ENCODE measurements at regions of chr19 and their contacts with region 1.

Region 1: DNA sequence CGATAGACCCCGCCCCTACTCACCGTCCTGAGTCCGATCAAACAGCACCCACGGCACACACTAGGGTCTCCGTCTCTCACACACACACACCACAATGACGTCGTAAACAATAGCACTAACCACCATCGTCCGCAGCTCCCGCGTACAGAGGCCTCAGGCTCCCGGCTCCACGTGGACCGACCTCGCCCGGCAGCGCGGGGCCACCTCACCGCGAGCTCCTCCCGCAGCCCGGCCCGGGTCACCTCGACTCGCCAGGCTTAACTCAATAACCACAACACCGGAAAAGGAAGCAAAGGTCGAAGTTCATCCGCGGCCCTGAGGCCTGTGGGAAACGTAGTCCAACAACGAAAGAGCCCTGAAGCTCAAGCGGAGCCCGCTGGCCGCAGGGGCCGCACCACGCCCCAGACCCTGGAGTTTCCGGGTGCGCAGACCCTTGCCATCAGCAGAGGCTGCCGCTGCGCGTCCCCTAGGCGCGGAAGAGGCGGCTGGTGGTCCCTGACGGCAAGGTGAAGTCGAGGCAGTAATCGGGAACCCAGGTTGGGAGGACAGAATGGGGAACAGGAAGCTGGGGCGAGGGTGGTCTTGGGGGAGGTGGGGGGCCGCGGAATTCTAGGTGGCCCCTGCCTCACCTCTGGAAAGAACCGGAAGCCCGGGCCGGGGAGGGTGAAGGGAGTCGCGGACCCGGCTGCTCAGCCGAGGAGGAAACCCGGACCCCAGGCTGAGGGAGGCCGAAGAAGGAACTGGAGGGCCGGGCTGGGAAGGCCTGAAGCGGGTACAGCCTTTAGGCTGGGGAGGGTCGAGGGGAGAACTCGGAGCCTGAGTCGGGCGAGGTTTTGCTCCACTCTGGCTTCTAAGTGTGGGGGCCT is at the start of gene ZNF529:
- DNase-seq: peak; percentile 87
- H3K4me3 ChIP-seq: peak within 1 kb of the TSS; percentile 53 to 100 (median 84)
- H3K27ac ChIP-seq: peak within 1 kb of the TSS; percentile 70
- H3K4me1 ChIP-seq: peaks cover 6% of the 10 kb centered on the region
- H3K27me3 ChIP-seq: no peaks in the 10 kb centered on the region
- CTCF ChIP-seq: no peak
- total RNA-seq, gene ZNF529: 10.0 to 12.4 TPM

Region 2: GRCh38 chr19:36528194-36528920 is 44.9 kb before region 1 on chr19 and contains the start of gene ZNF260:
- CTCF ChIA-PET with region 1: no interaction called
- dilution Hi-C with region 1: no loop called
- in situ Hi-C with region 1: no loop called
- intact Hi-C with region 1: loop called (anchors 5 kb)
- DNase-seq: peak; percentile 96
- H3K4me3 ChIP-seq: peak within 1 kb of the TSS; percentile 47 to 99 (median 86)
- H3K27ac ChIP-seq: peak within 1 kb of the TSS; percentile 88
- H3K4me1 ChIP-seq: peaks cover 5% of the 10 kb centered on the region
- H3K27me3 ChIP-seq: no peaks in the 10 kb centered on the region
- CTCF ChIP-seq: peak in 1 of 2 donors; percentile 9
- total RNA-seq, gene ZNF260: 11.8 to 21.0 TPM

Region 3: GRCh38 chr19:36665832-36666231 is 92.6 kb after region 1 on chr19:
- CTCF ChIA-PET with region 1: no interaction called
- dilution Hi-C with region 1: no loop called
- in situ Hi-C with region 1: no loop called
- intact Hi-C with region 1: loop called (anchors 1 kb)
- DNase-seq: no peak
- H3K4me3 ChIP-seq: peak overlapping the region; percentile 79 to 94 (median 92)
- H3K27ac ChIP-seq: peak overlapping the region; percentile 38
- H3K4me1 ChIP-seq: peaks cover 3% of the 10 kb centered on the region
- H3K27me3 ChIP-seq: no peaks in the 10 kb centered on the region
- CTCF ChIP-seq: no peak

Region 4: GRCh38 chr19:36687214-36688056 is 114.2 kb after region 1 on chr19 and contains the start of gene ZNF567:
- CTCF ChIA-PET with region 1: no interaction called
- dilution Hi-C with region 1: no loop called
- in situ Hi-C with region 1: no loop called
- intact Hi-C with region 1: loop called (anchors 1 kb)
- DNase-seq: peak; percentile 96
- H3K4me3 ChIP-seq: peak within 1 kb of the TSS; percentile 75 to 92 (median 90)
- H3K27ac ChIP-seq: peak within 1 kb of the TSS; percentile 69
- H3K4me1 ChIP-seq: no peaks in the 10 kb centered on the region
- H3K27me3 ChIP-seq: no peaks in the 10 kb centered on the region
- CTCF ChIP-seq: peak in 1 of 2 donors; percentile 11
- total RNA-seq, gene ZNF567: 7.3 to 7.5 TPM

Region 5: GRCh38 chr19:36775748-36776147 is 202.5 kb after region 1 on chr19:
- CTCF ChIA-PET with region 1: no interaction called
- dilution Hi-C with region 1: no loop called
- in situ Hi-C with region 1: no loop called
- intact Hi-C with region 1: no loop called
- DNase-seq: no peak
- H3K4me3 ChIP-seq: peak overlapping the region in 2 of 3 experiments; percentile 10 to 31
- H3K27ac ChIP-seq: no peak overlapping the region
- H3K4me1 ChIP-seq: no peaks in the 10 kb centered on the region
- H3K27me3 ChIP-seq: no peaks in the 10 kb centered on the region
- CTCF ChIP-seq: no peak